Activated naive CD4-positive, alpha-beta T cell treated with anti-CD3 and anti-CD28 coated beads for 36 hours (primary cell): ENCODE measurements at regions of chr2 and their contacts with region 1.

Region 1: DNA sequence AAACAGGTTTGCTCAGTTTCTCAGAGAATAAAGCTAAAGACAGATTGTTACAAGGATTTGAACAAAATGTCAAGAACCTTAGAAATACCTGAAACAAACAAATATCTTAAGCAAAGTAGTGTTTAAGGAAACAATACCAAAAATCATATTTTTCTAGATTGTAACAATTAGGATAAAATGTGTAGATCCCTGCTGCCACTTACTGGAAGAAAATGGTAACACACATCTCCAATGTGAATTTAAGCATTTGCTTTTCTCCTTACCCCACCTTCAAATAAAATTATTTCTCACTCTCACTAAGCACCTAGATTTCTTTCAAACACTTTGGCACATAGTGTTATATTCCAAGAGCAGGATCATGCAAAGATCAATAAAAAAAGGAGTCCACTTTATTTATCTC is 34.9 kb downstream of the SUCLG1 start:
- DNase-seq: no peak
- H3K4me3 Mint-ChIP-seq: no peak overlapping the region
- H3K27ac Mint-ChIP-seq: no peak overlapping the region
- H3K4me1 Mint-ChIP-seq: no peaks in the 10 kb centered on the region
- H3K27me3 Mint-ChIP-seq: no peaks in the 10 kb centered on the region

Region 2: GRCh38 chr2:84314901-84315330 is 109.2 kb before region 1 on chr2:
- CTCF ChIA-PET with region 1: interaction called, 5 read pairs
- intact Hi-C with region 1: loop called (anchors 5 kb)
- DNase-seq: peak; percentile 90
- H3K4me3 Mint-ChIP-seq: no peak overlapping the region
- H3K27ac Mint-ChIP-seq: no peak overlapping the region
- H3K4me1 Mint-ChIP-seq: peaks cover 4% of the 10 kb centered on the region
- H3K27me3 Mint-ChIP-seq: peaks cover 5% of the 10 kb centered on the region

Region 3: GRCh38 chr2:84441036-84441435 is 16.9 kb after region 1 on chr2:
- CTCF ChIA-PET with region 1: no interaction called
- intact Hi-C with region 1: no loop called
- DNase-seq: no peak
- H3K4me3 Mint-ChIP-seq: no peak overlapping the region
- H3K27ac Mint-ChIP-seq: no peak overlapping the region
- H3K4me1 Mint-ChIP-seq: peaks cover 9% of the 10 kb centered on the region
- H3K27me3 Mint-ChIP-seq: no peaks in the 10 kb centered on the region

Region 4: GRCh38 chr2:84970868-84971509 is 546.8 kb after region 1 on chr2 and contains the start of gene KCMF1:
- CTCF ChIA-PET with region 1: no interaction called
- intact Hi-C with region 1: no loop called
- DNase-seq: peak; percentile 80
- H3K4me3 Mint-ChIP-seq: peak within 1 kb of the TSS; percentile 98
- H3K27ac Mint-ChIP-seq: peak within 1 kb of the TSS; percentile 100
- H3K4me1 Mint-ChIP-seq: peaks cover 46% of the 10 kb centered on the region
- H3K27me3 Mint-ChIP-seq: no peaks in the 10 kb centered on the region
- total RNA-seq, gene KCMF1: 105 to 109 TPM